Natural killer cell (primary cell): ENCODE measurements at regions of chr7 and their contacts with region 1.

Region 1: DNA sequence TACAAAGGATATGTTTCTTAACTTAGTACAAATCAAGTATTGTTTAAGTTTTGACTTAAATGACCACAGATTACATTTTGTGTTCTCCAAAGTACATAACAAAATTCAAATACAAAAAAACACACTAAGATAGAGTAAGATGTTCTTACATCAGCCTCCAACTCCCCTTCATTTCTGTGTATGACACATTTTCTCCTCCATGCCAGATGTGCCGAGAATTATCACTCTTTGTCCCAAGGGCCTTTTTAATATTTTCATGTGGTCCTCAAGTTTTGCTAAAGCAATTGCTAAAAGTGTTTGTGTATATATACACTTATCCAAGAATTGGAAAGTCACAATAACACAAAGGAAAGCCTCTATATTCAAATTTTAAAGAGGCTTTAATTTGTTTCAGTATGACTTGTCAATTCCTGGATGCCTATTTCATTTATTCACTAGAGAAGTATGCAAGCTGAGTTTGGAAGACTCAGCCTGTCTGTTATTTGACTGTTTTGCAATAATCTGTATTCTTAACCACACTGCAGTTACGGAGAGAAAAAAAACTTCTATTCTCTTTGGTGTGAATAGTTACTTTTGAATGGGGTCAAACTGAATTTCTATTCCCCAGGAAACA is 586.4 kb upstream of the SEMA3D start:
- DNase-seq: no peak
- ATAC-seq: no peak
- H3K4me3 ChIP-seq: no peak overlapping the region
- H3K4me3 Mint-ChIP-seq: no peak overlapping the region
- H3K27ac ChIP-seq: no peak overlapping the region
- H3K27ac Mint-ChIP-seq: no peak overlapping the region
- H3K4me1 ChIP-seq: no peaks in the 10 kb centered on the region
- H3K4me1 Mint-ChIP-seq: no peaks in the 10 kb centered on the region
- H3K27me3 ChIP-seq: no peaks in the 10 kb centered on the region
- H3K27me3 Mint-ChIP-seq: no peaks in the 10 kb centered on the region
- CTCF ChIP-seq: no peak

Region 2: GRCh38 chr7:85737426-85737825 is 35.8 kb before region 1 on chr7:
- intact Hi-C with region 1: no loop called
- DNase-seq: no peak
- ATAC-seq: no peak
- H3K4me3 ChIP-seq: no peak overlapping the region
- H3K4me3 Mint-ChIP-seq: no peak overlapping the region
- H3K27ac ChIP-seq: no peak overlapping the region
- H3K27ac Mint-ChIP-seq: no peak overlapping the region
- H3K4me1 ChIP-seq: no peaks in the 10 kb centered on the region
- H3K4me1 Mint-ChIP-seq: no peaks in the 10 kb centered on the region
- H3K27me3 ChIP-seq: no peaks in the 10 kb centered on the region
- H3K27me3 Mint-ChIP-seq: no peaks in the 10 kb centered on the region
- CTCF ChIP-seq: no peak

Region 3: GRCh38 chr7:85840554-85840953 is 67.3 kb after region 1 on chr7:
- intact Hi-C with region 1: loop called (anchors 10 kb)
- DNase-seq: no peak
- ATAC-seq: no peak
- H3K4me3 ChIP-seq: no peak overlapping the region
- H3K4me3 Mint-ChIP-seq: no peak overlapping the region
- H3K27ac ChIP-seq: no peak overlapping the region
- H3K27ac Mint-ChIP-seq: no peak overlapping the region
- H3K4me1 ChIP-seq: no peaks in the 10 kb centered on the region
- H3K4me1 Mint-ChIP-seq: no peaks in the 10 kb centered on the region
- H3K27me3 ChIP-seq: no peaks in the 10 kb centered on the region
- H3K27me3 Mint-ChIP-seq: no peaks in the 10 kb centered on the region
- CTCF ChIP-seq: no peak

Region 4: GRCh38 chr7:85896531-85896930 is 123.3 kb after region 1 on chr7:
- intact Hi-C with region 1: no loop called
- DNase-seq: no peak
- ATAC-seq: no peak
- H3K4me3 ChIP-seq: no peak overlapping the region
- H3K4me3 Mint-ChIP-seq: no peak overlapping the region
- H3K27ac ChIP-seq: no peak overlapping the region
- H3K27ac Mint-ChIP-seq: no peak overlapping the region
- H3K4me1 ChIP-seq: no peaks in the 10 kb centered on the region
- H3K4me1 Mint-ChIP-seq: no peaks in the 10 kb centered on the region
- H3K27me3 ChIP-seq: no peaks in the 10 kb centered on the region
- H3K27me3 Mint-ChIP-seq: no peaks in the 10 kb centered on the region
- CTCF ChIP-seq: no peak